ENCODE measurements at regions of chr5 and their contacts with region 1.

Region 1: DNA sequence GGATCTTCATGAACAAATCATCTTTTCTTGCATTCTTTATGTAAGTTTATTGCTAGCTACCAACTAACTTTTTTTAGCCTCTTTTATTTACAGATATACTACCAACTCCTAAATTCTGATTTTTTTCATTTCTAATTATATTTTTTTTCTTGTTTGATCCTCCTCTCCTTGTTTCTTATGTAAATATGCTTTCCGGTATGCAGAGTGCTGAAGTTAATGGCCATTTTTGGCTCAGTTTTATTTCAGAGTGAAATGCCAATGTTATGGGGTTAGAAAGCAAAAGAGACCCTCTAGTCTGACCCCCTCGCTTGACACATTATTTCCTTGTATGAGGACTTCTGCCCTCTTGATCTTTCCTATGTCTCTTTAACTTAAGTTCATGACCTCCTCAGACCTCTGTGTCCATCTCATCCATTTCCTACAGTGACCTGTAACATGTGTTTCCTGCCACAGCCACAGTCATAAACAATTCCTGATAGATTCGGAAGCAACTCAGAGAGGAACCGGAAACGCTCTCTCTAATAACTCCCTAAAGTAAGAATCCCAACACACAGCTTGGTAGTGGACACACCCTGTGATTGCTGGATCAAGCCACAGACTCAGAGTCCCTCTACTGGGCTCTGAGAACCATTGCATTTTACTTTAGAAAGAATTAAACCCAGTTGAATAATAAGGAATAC is 42.9 kb upstream of the AFAP1L1 start:
- DNase-seq: peak; percentile 92
- H3K4me3 ChIP-seq: no peak overlapping the region
- H3K27ac ChIP-seq: no peak overlapping the region
- H3K4me1 ChIP-seq: peaks cover 18% of the 10 kb centered on the region
- H3K27me3 ChIP-seq: no peaks in the 10 kb centered on the region

Region 2: GRCh38 chr5:148353634-148354033 is 875.1 kb before region 1 on chr5:
- in situ Hi-C with region 1: no loop called
- DNase-seq: no peak
- H3K4me3 ChIP-seq: no peak overlapping the region
- H3K27ac ChIP-seq: no peak overlapping the region
- H3K4me1 ChIP-seq: no peaks in the 10 kb centered on the region
- H3K27me3 ChIP-seq: no peaks in the 10 kb centered on the region

Region 3: DNA sequence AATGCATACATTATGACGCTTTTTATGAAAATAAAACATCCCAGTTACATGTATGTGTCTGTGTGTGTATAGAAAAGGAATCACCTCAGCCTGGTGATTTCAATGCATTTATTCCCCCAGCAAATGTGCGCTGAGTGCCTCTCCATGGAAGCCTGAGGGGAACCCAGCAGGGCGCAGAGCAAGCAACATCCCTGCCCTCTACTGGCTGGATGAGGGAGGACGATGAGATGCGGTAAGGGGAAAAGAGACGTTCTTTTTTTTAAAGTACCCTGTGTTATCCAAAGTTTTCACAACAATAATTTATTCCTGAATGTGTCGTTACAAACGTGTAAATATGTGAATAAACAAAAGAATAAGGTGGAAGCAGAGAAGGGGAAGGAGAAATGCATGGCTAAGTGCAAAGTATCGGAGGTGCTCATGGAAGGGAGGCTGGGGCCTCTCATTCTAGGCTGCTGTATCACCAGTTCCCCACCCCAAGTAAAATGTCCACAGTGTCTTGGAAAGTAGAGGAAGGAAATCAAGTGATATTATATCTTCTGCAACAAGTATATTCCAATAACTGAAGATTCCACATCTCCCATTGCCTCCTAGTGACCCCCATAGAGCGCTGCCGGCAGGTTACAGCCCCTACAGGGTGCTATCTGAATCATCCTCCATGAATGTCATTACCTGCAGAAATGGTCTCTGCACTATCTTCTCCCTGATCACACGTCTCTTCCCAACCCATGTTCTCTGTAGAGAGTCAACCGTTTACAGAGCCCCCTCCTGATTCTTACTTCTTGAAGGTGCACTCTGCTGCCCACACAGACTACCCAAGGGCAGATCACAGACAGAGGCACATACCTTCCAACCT is 100.5 kb before region 1 on chr5:
- in situ Hi-C with region 1: loop called (anchors 5 kb)
- DNase-seq: peak; percentile 60
- H3K4me3 ChIP-seq: no peak overlapping the region
- H3K27ac ChIP-seq: no peak overlapping the region
- H3K4me1 ChIP-seq: peaks cover 17% of the 10 kb centered on the region
- H3K27me3 ChIP-seq: no peaks in the 10 kb centered on the region